GM12878 (cell line): ENCODE measurements at regions of chr4 and their contacts with region 1.

Region 1: DNA sequence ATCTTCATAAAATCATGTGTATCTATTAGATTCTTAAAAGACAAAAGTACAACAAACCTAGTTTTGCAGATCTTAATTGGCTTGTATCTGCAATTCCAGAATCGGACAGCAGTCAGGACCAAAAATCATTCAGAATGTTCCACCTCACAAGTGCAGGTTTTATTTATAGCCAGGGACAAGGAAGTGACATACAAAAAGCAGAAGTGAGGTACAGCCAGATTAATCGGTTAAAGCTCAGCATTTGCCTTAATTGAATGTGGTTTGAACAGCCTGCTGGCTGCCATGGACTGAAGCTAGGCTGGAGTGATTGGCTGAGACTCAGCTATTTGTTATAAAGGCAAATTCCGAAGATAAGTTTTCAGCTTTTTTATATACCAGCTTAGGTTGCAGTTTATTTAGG is 932.6 kb downstream of the C4orf33 start:
- DNase-seq: peak; percentile 33
- ATAC-seq: peak; percentile 94
- H3K4me3 ChIP-seq: no peak overlapping the region
- H3K27ac ChIP-seq: no peak overlapping the region
- H3K4me1 ChIP-seq: no peaks in the 10 kb centered on the region
- H3K27me3 ChIP-seq: no peaks in the 10 kb centered on the region
- CTCF ChIP-seq: no peak; a peak in 1 of 6 replicates
- EP300 ChIP-seq: peak; percentile 43 to 55; a peak in 2 of 4 replicates
- POLR2A ChIP-seq: no peak
- RAD21 ChIP-seq: no peak

Region 2: GRCh38 chr4:129994715-129995114 is 33.8 kb before region 1 on chr4:
- CTCF ChIA-PET with region 1: interaction called, 3 read pairs
- POLR2A ChIA-PET with region 1: no interaction called
- RAD21 ChIA-PET with region 1: interaction called, 16 read pairs
- SMC1A ChIA-PET with region 1: interaction called, 8 read pairs
- in situ Hi-C with region 1: no loop called
- intact Hi-C with region 1: no loop called
- DNase-seq: peak; percentile 4
- ATAC-seq: peak; percentile 89
- H3K4me3 ChIP-seq: no peak overlapping the region
- H3K27ac ChIP-seq: no peak overlapping the region
- H3K4me1 ChIP-seq: no peaks in the 10 kb centered on the region
- H3K27me3 ChIP-seq: no peaks in the 10 kb centered on the region
- CTCF ChIP-seq: no peak
- EP300 ChIP-seq: 0 out of 4 replicates have a peak, but pooled peaks of 1 of the 2 experiments have one; percentile 8
- POLR2A ChIP-seq: no peak
- RAD21 ChIP-seq: no peak

Region 3: DNA sequence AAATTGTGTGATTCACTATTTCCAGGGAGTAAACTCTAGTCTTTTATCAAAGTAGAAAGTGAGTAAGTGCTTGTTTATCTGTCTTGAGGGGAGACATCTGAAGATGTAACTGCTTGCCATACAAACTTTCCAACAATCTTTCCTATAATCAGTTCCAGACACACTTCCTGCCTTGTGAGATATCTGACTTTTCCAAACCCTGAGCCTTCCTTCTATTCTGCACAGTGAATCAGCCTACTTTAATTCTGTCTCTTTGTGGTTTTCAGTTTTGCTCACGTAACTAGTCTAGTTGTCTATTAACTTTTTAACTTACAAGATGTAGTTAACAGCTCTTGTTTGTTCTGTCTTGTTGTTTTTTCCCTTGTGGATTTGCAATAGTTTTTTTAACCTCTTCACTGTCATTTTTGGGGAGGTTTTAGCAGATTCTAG is 15.2 kb after region 1 on chr4:
- CTCF ChIA-PET with region 1: interaction called, 3 read pairs
- POLR2A ChIA-PET with region 1: no interaction called
- RAD21 ChIA-PET with region 1: interaction called, 3 read pairs
- SMC1A ChIA-PET with region 1: interaction called, 13 read pairs
- in situ Hi-C with region 1: no loop called
- intact Hi-C with region 1: no loop called
- DNase-seq: no peak
- ATAC-seq: peak; percentile 85
- H3K4me3 ChIP-seq: no peak overlapping the region
- H3K27ac ChIP-seq: no peak overlapping the region
- H3K4me1 ChIP-seq: no peaks in the 10 kb centered on the region
- H3K27me3 ChIP-seq: no peaks in the 10 kb centered on the region
- CTCF ChIP-seq: no peak
- EP300 ChIP-seq: no peak
- POLR2A ChIP-seq: no peak
- RAD21 ChIP-seq: no peak

Region 4: DNA sequence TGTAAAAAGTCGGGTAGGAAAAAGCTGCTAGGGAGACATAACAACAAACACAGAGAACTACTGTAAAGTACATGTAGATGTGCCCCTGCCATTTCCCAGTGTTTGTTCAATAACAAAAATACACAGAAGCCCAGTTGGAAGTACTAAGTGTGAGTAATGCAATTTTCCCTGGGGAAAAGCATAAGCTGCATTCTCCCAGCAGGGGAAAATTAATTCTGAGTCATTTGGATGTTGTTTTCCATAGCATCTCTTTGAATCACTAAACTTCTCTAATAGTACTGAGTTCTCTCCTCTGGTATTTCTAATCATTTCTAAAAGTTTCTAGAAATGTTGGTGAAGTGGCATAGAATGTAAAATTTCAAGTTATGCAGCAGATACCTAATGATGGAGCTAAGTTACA is 182.3 kb after region 1 on chr4:
- CTCF ChIA-PET with region 1: no interaction called
- POLR2A ChIA-PET with region 1: no interaction called
- RAD21 ChIA-PET with region 1: no interaction called
- SMC1A ChIA-PET with region 1: no interaction called
- in situ Hi-C with region 1: no loop called
- intact Hi-C with region 1: no loop called
- DNase-seq: no peak
- ATAC-seq: no peak
- H3K4me3 ChIP-seq: no peak overlapping the region
- H3K27ac ChIP-seq: no peak overlapping the region
- H3K4me1 ChIP-seq: no peaks in the 10 kb centered on the region
- H3K27me3 ChIP-seq: no peaks in the 10 kb centered on the region
- CTCF ChIP-seq: no peak
- EP300 ChIP-seq: no peak
- POLR2A ChIP-seq: no peak
- RAD21 ChIP-seq: no peak